Activated CD8-positive, alpha-beta memory T cell treated with anti-CD3 and anti-CD28 coated beads, Interleukin-2, amount 10 ng/mL, durations not matched to agents 7 days and 5 days (primary cell): ENCODE measurements at regions of chr12 and their contacts with region 1.

Region 1: DNA sequence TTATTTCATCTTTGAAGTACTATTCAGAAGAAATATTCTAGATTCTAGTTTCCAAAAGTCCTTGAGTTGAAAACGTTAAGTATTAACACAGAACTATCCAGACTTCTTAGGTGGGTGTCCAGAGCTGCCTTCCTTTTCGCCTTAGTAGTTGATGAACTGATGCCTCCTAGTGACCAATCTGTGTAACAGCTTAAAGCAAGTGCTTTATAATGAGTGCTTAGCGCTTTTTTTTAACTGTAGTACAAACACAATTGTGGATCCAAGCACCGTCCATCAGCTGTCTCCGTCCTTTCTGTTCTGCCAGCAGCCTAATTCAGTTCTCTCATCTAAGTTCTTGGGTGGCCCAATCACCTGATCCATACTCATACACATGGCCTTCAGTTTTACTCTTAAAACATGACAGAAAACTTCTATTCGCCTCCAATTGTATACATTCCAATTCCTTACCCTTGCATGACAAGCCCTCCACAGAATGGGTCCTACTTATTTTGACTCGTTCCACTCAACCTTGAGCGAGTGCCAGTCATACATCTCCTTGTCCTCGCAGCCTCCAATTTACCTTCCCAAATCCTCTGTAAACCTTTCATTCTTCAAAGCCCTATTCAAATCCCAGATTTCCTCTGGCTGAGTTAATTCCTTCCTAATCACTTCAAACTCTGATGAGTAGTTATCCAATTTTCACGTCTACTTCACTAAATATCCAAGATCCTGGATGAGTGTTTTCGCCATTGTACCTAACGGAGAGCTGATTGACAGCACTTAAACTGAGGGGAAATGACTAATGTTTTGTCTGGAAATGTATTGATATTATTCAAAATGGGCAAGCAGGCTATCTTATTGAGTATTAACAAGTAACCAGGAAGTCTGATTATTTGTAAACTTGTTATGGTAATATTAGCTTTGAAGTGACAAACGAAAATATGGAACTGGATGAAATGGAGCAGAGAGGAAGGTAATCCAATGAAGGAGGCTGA is 5.8 kb upstream of the PHLDA1 start:
- DNase-seq: peak; percentile 55
- ATAC-seq: peak; percentile 79
- H3K4me3 Mint-ChIP-seq: no peak overlapping the region
- H3K27ac Mint-ChIP-seq: no peak overlapping the region
- H3K4me1 Mint-ChIP-seq: peaks cover 36% of the 10 kb centered on the region
- H3K27me3 Mint-ChIP-seq: no peaks in the 10 kb centered on the region

Region 2: DNA sequence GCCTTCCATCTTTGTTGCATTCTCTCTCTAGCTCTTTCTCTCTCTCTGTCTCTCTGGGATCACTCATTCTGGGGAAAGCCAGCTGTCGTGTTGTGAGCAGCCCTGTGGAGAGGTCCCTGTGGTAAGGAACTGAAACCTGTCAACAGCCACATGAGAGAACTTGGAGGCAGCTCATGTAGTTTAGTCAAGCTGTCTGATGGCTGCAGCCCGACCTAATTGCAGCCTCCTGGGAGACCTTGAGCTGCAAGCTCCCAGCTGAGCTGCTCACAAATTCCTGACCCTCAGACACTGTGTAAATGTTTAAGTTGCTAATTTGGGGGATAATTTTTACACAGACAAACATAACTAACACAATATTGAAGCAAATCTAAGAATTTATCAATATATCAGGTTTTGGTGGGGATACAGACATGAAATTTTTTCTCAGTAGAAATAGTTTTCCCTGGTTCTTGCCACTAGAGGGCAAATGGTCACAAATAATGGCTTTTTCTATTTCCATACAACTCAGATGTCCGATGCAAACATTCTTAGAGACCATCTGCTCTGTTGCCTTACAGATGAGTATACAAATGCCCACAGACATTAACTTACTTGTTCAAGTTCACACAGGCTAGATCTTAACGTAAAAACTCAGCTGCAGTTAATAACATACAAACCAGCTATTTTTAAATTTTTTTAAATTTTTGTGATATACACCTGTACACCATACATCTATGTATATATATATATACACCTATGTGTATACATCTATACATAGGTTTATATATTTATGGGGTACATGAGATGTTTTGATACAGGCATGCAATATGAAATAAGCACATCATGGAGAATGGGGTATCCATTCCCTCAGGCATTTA is 510.5 kb before region 1 on chr12:
- CTCF ChIA-PET with region 1: interaction called, 42 read pairs
- DNase-seq: peak; percentile 58
- ATAC-seq: peak; percentile 76
- H3K4me3 Mint-ChIP-seq: no peak overlapping the region
- H3K27ac Mint-ChIP-seq: peak overlapping the region; percentile 54
- H3K4me1 Mint-ChIP-seq: peaks cover 10% of the 10 kb centered on the region
- H3K27me3 Mint-ChIP-seq: peaks cover 22% of the 10 kb centered on the region

Region 3: DNA sequence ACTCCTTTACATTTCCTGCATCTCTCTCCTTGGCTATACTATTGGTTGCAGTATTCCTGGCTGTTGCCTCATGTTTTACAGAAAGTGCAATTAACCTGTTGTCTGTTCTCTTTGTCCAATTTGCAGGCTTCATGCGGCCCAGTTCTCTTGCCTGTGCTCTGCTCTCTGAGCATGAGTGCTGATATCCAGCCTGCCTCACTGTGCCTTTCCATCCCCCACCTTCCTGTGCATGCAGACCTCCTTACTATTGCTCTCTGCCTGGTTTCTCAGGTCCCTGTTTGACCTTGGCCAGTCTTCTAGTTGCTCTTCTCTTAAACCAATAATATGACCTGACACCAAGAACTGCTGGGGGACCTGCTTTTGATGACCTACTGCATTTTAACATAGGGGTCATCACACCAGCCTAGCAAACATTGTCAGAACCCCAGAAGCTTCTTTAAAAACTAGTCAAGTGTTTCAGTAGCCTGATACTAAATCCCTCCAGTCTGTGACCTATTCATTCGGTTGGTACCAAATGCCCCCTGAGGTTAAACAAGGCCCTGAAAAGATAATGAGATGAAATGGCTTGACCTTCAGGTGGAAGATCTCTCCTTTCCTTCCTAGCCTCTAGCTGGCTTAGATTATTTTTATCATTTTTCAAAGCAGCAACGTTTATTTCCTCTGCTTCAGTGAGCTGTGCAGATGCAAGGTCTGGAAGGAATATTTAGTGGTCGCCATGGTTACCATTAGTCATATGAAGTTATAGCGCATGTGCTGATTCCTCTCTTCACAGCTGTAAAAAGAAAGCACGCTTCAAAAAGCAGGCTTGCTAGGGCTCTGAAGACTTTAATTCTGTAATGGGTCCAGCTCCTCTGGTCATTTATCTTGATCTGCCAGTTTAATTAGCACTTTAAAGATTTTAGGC is 222.3 kb before region 1 on chr12:
- CTCF ChIA-PET with region 1: interaction called, 15 read pairs
- DNase-seq: no peak
- ATAC-seq: peak; percentile 50
- H3K4me3 Mint-ChIP-seq: no peak overlapping the region
- H3K27ac Mint-ChIP-seq: peak overlapping the region; percentile 2
- H3K4me1 Mint-ChIP-seq: peaks cover 48% of the 10 kb centered on the region
- H3K27me3 Mint-ChIP-seq: no peaks in the 10 kb centered on the region

Region 4: GRCh38 chr12:76006028-76006925 is 31.1 kb before region 1 on chr12:
- CTCF ChIA-PET with region 1: no interaction called
- DNase-seq: no peak
- ATAC-seq: no peak
- H3K4me3 Mint-ChIP-seq: no peak overlapping the region
- H3K27ac Mint-ChIP-seq: no peak overlapping the region
- H3K4me1 Mint-ChIP-seq: no peaks in the 10 kb centered on the region
- H3K27me3 Mint-ChIP-seq: no peaks in the 10 kb centered on the region

Region 5: DNA sequence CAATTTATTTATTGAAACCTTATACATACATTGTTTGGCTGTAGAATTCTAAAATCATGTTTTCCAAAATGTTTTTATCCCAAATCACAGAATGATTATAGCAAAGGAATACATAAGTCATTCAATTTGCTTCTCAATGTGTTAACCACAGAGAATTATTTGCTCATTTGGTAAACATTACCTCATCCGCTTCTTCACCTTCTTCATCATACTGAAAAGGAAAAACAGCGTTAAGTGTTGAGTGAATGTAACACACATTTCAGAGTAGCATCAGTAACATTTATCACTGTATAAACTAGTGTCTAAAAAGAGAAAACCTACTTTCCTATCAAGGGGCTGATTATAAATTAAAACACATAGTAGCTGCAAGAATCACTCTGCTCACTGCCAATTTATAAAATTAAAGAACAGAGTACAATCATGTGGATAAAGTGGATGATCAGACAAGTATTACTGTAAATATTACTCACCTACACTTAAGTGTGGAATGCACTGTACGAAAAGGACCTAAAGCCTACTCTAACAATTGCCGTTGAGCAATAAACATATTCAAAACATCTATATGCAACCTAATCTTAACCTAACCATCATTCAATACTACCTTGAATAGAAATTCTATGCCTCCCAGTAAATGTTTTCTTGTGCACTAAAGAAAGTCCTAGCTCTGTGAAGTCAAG is 12.3 kb after region 1 on chr12:
- CTCF ChIA-PET with region 1: interaction called, 13 read pairs
- DNase-seq: no peak
- ATAC-seq: no peak
- H3K4me3 Mint-ChIP-seq: no peak overlapping the region
- H3K27ac Mint-ChIP-seq: no peak overlapping the region
- H3K4me1 Mint-ChIP-seq: peaks cover 11% of the 10 kb centered on the region
- H3K27me3 Mint-ChIP-seq: no peaks in the 10 kb centered on the region

Region 6: GRCh38 chr12:76450690-76451089 is 413.3 kb after region 1 on chr12:
- CTCF ChIA-PET with region 1: no interaction called
- DNase-seq: no peak
- ATAC-seq: no peak
- H3K4me3 Mint-ChIP-seq: no peak overlapping the region
- H3K27ac Mint-ChIP-seq: no peak overlapping the region
- H3K4me1 Mint-ChIP-seq: peaks cover 13% of the 10 kb centered on the region
- H3K27me3 Mint-ChIP-seq: no peaks in the 10 kb centered on the region